ENCODE measurements at regions of chr6 and their contacts with region 1.

Region 1: GRCh38 chr6:20401205-20402091 is at the start of gene E2F3:
- DNase-seq: peak; percentile 98
- ATAC-seq: peak; percentile 83
- H3K4me3 ChIP-seq: peak within 1 kb of the TSS; percentile 82
- H3K27ac ChIP-seq: peak within 1 kb of the TSS; percentile 77
- H3K4me1 ChIP-seq: no peaks in the 10 kb centered on the region; the same call in 1 of the 2 replicates
- H3K27me3 ChIP-seq: no peaks in the 10 kb centered on the region
- CTCF ChIP-seq: no peak
- EP300 ChIP-seq: no peak
- POLR2A ChIP-seq: peak; percentile 87
- RAD21 ChIP-seq: no peak
- polyA plus RNA-seq, gene E2F3: 5.3 to 6.6 TPM

Region 2: GRCh38 chr6:20212392-20213217 is 188.8 kb before region 1 on chr6 and contains the start of gene MBOAT1:
- CTCF ChIA-PET with region 1: no interaction called
- POLR2A ChIA-PET with region 1: interaction called, 3 read pairs
- RAD21 ChIA-PET with region 1: no interaction called
- SMC1A ChIA-PET with region 1: interaction called, 3 read pairs
- in situ Hi-C with region 1: no loop called
- intact Hi-C with region 1: loop called (anchors 5 kb)
- DNase-seq: no peak
- ATAC-seq: peak; percentile 89
- H3K4me3 ChIP-seq: peak within 1 kb of the TSS; percentile 82
- H3K27ac ChIP-seq: peak within 1 kb of the TSS; percentile 77
- H3K4me1 ChIP-seq: peaks cover 10% of the 10 kb centered on the region
- H3K27me3 ChIP-seq: no peaks in the 10 kb centered on the region
- CTCF ChIP-seq: peak in 2 of 3 experiments; percentile 7 to 16; a peak in 1 of 6 replicates
- EP300 ChIP-seq: no peak
- POLR2A ChIP-seq: peak; percentile 86
- RAD21 ChIP-seq: no peak
- polyA plus RNA-seq, gene MBOAT1: 0.39 to 0.44 TPM

Region 3: DNA sequence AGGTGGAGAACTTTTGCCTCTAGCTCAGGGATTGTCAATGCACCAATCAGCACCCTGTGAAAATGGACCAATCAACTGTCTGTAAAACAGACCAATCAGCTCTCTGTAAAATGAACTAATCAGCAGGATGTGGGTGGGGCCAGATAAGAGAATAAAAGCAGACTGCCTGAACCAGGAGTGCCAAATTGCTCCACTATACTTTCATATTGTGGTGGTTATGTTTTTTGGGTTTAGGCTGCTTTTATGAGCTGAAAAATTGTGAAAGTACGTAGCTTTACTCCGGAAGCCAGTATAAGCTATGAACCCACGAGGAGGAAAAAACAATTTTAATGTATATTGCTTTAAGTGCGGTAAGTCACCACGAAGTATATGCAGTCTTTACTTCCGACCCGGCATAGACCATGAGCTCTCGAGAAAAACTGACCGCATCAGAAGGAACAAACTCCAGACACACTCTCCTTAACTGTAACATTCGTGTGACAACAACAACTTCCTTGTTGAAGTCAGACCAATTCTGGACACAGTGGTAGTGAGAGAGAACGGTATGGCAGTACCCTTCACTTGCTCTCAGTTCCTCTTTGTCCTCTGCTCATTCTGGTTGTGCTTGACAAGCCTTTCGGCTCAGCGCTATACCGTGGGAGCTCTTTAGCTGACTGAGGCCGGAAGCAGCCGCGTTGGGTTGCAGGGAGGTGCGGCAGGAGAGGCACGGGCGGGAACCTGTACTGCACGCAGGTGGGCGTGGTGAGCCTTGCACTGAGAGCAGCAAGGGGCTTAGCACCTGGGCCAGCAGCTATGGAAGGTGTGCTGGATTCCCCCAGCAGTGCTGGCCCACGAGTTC is 81.7 kb before region 1 on chr6:
- CTCF ChIA-PET with region 1: interaction called, 16 read pairs
- POLR2A ChIA-PET with region 1: interaction called, 9 read pairs
- RAD21 ChIA-PET with region 1: interaction called, 9 read pairs
- SMC1A ChIA-PET with region 1: interaction called, 20 read pairs
- in situ Hi-C with region 1: no loop called
- intact Hi-C with region 1: loop called (anchors 2 kb)
- DNase-seq: peak; percentile 98
- ATAC-seq: peak; percentile 99
- H3K4me3 ChIP-seq: peak overlapping the region; percentile 53; the same call in 1 of the 2 replicates
- H3K27ac ChIP-seq: peak overlapping the region; percentile 83
- H3K4me1 ChIP-seq: peaks cover 9% of the 10 kb centered on the region; the same call in 1 of the 2 replicates
- H3K27me3 ChIP-seq: no peaks in the 10 kb centered on the region
- CTCF ChIP-seq: no peak
- EP300 ChIP-seq: peak; percentile 42 to 95; a peak in 3 of 4 replicates
- POLR2A ChIP-seq: peak; percentile 78
- RAD21 ChIP-seq: 0 out of 2 replicates have a peak, but pooled peaks have one; percentile 11

Region 4: DNA sequence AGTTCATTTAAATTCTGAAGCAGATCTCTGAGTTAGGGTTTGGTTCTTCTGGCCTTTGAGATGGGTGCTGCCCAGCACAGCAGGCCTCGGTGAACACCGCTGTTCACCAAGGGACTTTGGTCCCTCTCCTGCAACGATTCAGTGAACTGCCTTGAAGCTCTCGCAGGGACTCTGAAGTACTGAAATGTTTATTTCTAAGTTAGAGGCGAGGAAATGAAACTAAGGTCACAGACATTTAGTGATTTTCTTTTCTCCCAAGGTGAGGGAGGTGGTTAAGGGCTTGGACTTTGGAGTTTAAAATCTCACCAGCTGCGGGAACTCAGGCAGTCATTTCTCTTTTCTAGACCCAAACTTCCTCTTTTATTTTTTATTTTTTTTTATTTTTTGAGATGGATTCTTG is 26.4 kb after region 1 on chr6:
- CTCF ChIA-PET with region 1: interaction called, 13 read pairs
- POLR2A ChIA-PET with region 1: interaction called, 4 read pairs
- RAD21 ChIA-PET with region 1: interaction called, 18 read pairs
- SMC1A ChIA-PET with region 1: interaction called, 17 read pairs
- in situ Hi-C with region 1: no loop called
- intact Hi-C with region 1: no loop called
- DNase-seq: peak; percentile 73
- ATAC-seq: peak; percentile 95
- H3K4me3 ChIP-seq: 0 out of 2 replicates have a peak overlapping the region, but pooled peaks have one; percentile 13
- H3K27ac ChIP-seq: peak overlapping the region; percentile 69
- H3K4me1 ChIP-seq: peaks cover 27% of the 10 kb centered on the region
- H3K27me3 ChIP-seq: no peaks in the 10 kb centered on the region
- CTCF ChIP-seq: no peak
- EP300 ChIP-seq: peak in 1 of 2 experiments; percentile 56; a peak in 1 of 4 replicates
- POLR2A ChIP-seq: no peak
- RAD21 ChIP-seq: no peak

Region 5: GRCh38 chr6:20458027-20458894 is 56.8 kb after region 1 on chr6:
- CTCF ChIA-PET with region 1: interaction called, 11 read pairs
- POLR2A ChIA-PET with region 1: interaction called, 3 read pairs
- RAD21 ChIA-PET with region 1: interaction called, 11 read pairs
- SMC1A ChIA-PET with region 1: interaction called, 11 read pairs
- in situ Hi-C with region 1: no loop called
- intact Hi-C with region 1: no loop called
- DNase-seq: no peak
- ATAC-seq: no peak
- H3K4me3 ChIP-seq: no peak overlapping the region
- H3K27ac ChIP-seq: no peak overlapping the region
- H3K4me1 ChIP-seq: peaks cover 6% of the 10 kb centered on the region
- H3K27me3 ChIP-seq: no peaks in the 10 kb centered on the region
- CTCF ChIP-seq: no peak
- EP300 ChIP-seq: no peak
- POLR2A ChIP-seq: no peak
- RAD21 ChIP-seq: no peak

Region 6: DNA sequence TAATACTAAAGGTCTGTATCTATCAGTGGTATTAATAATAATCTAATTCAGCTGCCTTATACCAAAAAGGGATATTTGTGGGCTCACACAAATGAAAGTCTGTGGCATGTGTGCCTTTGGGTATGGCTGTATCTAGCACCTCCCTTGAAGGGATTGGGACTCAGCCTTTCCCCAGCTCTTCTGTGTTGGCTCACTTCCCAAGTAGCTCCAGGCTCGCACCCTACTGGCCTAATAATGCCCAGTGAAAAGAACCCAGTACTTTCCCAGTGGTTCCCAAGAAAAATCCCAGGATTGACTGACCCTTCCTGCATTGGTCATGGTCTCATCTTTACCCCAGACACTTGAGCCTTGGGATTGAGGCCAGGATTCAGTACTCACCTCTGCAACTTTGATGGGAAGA is 72.1 kb after region 1 on chr6:
- CTCF ChIA-PET with region 1: interaction called, 12 read pairs
- POLR2A ChIA-PET with region 1: no interaction called
- RAD21 ChIA-PET with region 1: interaction called, 12 read pairs
- SMC1A ChIA-PET with region 1: interaction called, 35 read pairs
- in situ Hi-C with region 1: no loop called
- intact Hi-C with region 1: no loop called
- DNase-seq: no peak
- ATAC-seq: no peak
- H3K4me3 ChIP-seq: no peak overlapping the region
- H3K27ac ChIP-seq: no peak overlapping the region
- H3K4me1 ChIP-seq: 0 out of 2 replicates have a peak, but pooled peaks cover under 1% of the 10 kb centered on the region
- H3K27me3 ChIP-seq: no peaks in the 10 kb centered on the region
- CTCF ChIP-seq: no peak
- EP300 ChIP-seq: no peak
- POLR2A ChIP-seq: no peak
- RAD21 ChIP-seq: no peak

Region 7: DNA sequence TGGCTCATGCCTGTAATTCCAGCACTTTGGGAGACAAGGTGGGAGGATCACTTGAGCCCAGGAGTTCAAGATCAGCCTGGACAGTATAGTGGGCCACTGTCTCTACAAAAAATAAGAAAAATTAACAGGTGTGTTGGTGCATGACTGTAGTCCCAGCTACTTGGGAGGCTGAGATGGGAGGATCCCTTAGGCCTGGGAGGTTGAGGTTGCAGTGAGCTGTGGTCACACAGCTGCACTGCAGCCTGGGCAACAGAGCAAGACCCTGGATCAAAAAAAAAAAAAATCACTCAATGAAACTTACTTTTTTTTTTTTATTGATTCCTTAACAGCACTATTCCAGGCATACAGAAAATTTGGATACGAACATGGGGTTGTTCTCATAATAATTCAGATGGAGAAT is 146.8 kb after region 1 on chr6:
- CTCF ChIA-PET with region 1: no interaction called
- POLR2A ChIA-PET with region 1: no interaction called
- RAD21 ChIA-PET with region 1: no interaction called
- SMC1A ChIA-PET with region 1: no interaction called
- in situ Hi-C with region 1: no loop called
- intact Hi-C with region 1: no loop called
- DNase-seq: no peak
- ATAC-seq: no peak
- H3K4me3 ChIP-seq: no peak overlapping the region
- H3K27ac ChIP-seq: no peak overlapping the region
- H3K4me1 ChIP-seq: peaks cover 5% of the 10 kb centered on the region; the same call in 1 of the 2 replicates
- H3K27me3 ChIP-seq: no peaks in the 10 kb centered on the region
- CTCF ChIP-seq: no peak
- EP300 ChIP-seq: no peak
- POLR2A ChIP-seq: no peak
- RAD21 ChIP-seq: no peak